GM12878 (cell line): ENCODE measurements at regions of chr1 and their contacts with region 1.

Region 1: DNA sequence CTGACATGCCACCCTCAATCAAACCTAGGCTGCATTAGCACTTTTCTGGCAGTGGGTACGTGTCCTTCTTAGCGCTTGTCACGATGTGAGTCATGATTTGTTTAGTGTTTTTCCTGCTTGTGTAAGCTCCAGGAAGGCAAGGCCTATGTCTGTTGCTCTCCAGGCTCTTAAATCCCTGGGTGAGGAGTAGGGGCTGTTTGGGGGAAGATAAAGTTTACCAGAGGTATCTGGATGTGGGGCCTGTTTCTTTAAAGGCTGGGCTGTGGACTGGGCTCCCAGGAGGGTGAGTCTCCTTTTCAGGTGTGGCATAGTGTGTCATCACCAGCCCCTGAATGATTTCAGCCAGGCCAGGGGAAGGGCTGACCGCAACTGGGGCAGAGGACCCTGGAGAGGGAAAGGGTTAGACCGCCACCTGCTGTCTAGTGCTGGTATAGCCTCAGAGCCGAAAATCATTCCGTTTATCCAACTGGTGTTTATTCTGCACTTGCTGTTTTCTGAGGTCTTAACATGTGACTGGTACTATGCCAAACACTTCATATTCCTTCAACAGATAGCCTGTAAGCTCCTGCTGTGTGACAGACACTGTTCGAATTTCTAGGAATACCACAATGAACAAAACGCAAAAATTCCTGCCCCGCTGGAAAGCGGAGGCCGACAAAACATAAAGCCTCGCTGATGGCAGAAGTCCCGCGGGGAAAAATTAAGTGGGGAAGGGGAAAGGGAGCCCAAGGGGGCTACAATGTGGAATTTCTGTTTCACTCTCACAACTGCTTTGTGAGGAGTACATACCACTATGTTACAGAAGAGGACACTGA is 9.7 kb downstream of the SERINC2 start:
- DNase-seq: peak; percentile 47
- ATAC-seq: peak; percentile 71
- H3K4me3 ChIP-seq: peak overlapping the region; percentile 29; the same call in 1 of the 2 replicates
- H3K27ac ChIP-seq: no peak overlapping the region
- H3K4me1 ChIP-seq: peaks cover 11% of the 10 kb centered on the region
- H3K27me3 ChIP-seq: no peaks in the 10 kb centered on the region
- CTCF ChIP-seq: peak; percentile 94 to 96 (median 95)
- EP300 ChIP-seq: no peak
- POLR2A ChIP-seq: no peak
- RAD21 ChIP-seq: peak; percentile 80

Region 2: DNA sequence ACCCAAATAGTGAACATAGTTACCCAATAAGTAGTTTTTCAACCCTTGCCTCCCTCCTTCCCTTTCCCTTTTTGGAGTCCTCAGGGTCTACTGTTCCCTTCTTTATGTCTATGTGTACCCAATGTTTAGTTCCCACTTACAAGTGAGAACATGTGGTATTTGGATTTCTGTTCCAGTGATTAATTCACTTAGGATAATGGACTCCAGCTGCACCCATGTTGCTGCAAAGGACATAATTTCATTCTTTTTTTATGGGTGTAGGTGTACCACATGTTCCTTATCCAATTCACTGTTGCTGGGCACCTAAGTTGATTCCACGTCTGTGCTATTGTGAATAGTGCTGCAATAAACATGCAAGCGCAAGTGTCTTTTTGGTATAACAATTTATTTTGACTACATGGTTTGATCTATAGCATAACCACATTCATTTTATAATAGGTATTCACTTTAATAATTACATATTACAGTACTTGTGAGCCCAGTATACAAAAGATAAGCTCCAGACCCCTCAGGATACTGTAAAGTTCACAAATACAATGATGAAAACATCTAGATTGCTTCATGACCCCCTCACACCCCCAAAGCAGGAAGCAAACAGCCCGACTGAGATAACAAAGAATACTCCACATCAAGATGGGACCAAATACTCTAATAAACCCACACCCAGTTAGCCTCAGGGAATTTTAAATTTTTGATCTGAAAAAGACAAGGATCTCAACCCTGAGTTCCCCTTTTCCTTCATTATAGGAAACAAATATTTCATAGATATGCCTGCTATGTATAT is 402.5 kb before region 1 on chr1:
- CTCF ChIA-PET with region 1: no interaction called
- POLR2A ChIA-PET with region 1: no interaction called
- RAD21 ChIA-PET with region 1: no interaction called
- SMC1A ChIA-PET with region 1: no interaction called
- in situ Hi-C with region 1: no loop called
- intact Hi-C with region 1: no loop called
- DNase-seq: no peak
- ATAC-seq: no peak
- H3K4me3 ChIP-seq: no peak overlapping the region
- H3K27ac ChIP-seq: no peak overlapping the region
- H3K4me1 ChIP-seq: no peaks in the 10 kb centered on the region
- H3K27me3 ChIP-seq: no peaks in the 10 kb centered on the region
- CTCF ChIP-seq: no peak
- EP300 ChIP-seq: no peak
- POLR2A ChIP-seq: no peak
- RAD21 ChIP-seq: no peak

Region 3: GRCh38 chr1:31182352-31182751 is 240.4 kb before region 1 on chr1:
- CTCF ChIA-PET with region 1: interaction called, 47 read pairs
- POLR2A ChIA-PET with region 1: interaction called, 3 read pairs
- RAD21 ChIA-PET with region 1: interaction called, 20 read pairs
- SMC1A ChIA-PET with region 1: interaction called, 14 read pairs
- in situ Hi-C with region 1: loop called (anchors 10 kb)
- intact Hi-C with region 1: loop called (anchors 2 kb)
- DNase-seq: no peak
- ATAC-seq: peak; percentile 75
- H3K4me3 ChIP-seq: no peak overlapping the region
- H3K27ac ChIP-seq: no peak overlapping the region
- H3K4me1 ChIP-seq: no peaks in the 10 kb centered on the region
- H3K27me3 ChIP-seq: no peaks in the 10 kb centered on the region; a peak in 3 of 4 replicates
- CTCF ChIP-seq: 0 out of 6 replicates have a peak, but pooled peaks of 1 of the 3 experiments have one; percentile 1
- EP300 ChIP-seq: no peak
- POLR2A ChIP-seq: no peak
- RAD21 ChIP-seq: no peak

Region 4: DNA sequence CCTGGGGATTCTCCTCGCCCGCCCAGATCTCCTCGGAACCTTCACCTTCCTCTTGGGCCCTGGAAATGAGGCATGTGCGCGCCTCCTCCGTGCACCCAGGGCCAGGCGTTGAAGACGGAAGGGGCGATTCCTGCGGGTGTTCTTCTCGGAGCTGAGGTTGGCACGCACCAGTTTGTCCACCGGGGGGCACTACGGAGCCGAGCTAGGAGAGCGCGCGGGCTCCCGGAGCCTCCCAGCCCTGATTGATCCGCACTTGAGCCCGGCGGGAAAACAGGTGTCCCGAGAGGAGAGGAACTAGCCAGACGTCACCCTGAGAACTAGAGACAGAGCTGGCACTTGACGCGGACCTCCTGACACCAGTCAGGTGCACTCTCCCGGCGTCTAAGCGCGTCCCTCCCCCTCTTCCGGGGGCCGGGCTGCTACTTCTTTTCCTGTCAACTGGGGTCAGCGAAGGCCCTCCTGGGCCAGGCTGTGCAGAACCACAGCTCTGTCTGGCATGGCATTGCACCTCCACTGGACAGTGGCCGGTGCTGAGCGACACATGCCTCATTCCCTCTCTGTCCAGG is 28.0 kb before region 1 on chr1:
- CTCF ChIA-PET with region 1: interaction called, 204 read pairs
- POLR2A ChIA-PET with region 1: interaction called, 6 read pairs
- RAD21 ChIA-PET with region 1: interaction called, 99 read pairs
- SMC1A ChIA-PET with region 1: interaction called, 132 read pairs
- in situ Hi-C with region 1: no loop called
- intact Hi-C with region 1: loop called (anchors 1 kb)
- DNase-seq: peak; percentile 21
- ATAC-seq: peak; percentile 98
- H3K4me3 ChIP-seq: peak overlapping the region; percentile 50; the same call in 1 of the 2 replicates
- H3K27ac ChIP-seq: no peak overlapping the region
- H3K4me1 ChIP-seq: peaks cover 2% of the 10 kb centered on the region
- H3K27me3 ChIP-seq: no peaks in the 10 kb centered on the region; a peak in 1 of 4 replicates
- CTCF ChIP-seq: peak; percentile 82 to 92 (median 83)
- EP300 ChIP-seq: peak in 1 of 2 experiments; percentile 10; a peak in 1 of 4 replicates
- POLR2A ChIP-seq: no peak
- RAD21 ChIP-seq: peak; percentile 72

Region 5: DNA sequence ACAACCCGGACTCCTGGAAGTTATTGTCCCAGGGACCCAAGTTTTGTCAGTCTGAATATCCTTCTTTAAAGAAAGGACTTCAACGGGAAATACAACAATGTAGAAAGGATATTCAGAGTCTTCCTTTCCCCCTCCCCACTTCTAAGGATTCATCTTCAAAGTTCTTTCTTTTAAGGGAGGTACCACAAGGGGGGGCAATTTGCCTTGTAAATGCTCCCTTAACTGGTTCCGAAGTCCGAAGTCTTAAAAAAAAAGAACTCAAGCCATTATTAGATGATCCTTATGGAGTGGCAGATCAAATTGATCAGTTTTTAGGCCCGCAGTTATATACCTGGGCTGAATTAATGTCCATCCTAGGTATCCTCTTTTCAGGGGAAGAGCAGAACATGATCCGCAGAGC is 37.3 kb after region 1 on chr1:
- CTCF ChIA-PET with region 1: interaction called, 16 read pairs
- POLR2A ChIA-PET with region 1: no interaction called
- RAD21 ChIA-PET with region 1: no interaction called
- SMC1A ChIA-PET with region 1: no interaction called
- in situ Hi-C with region 1: no loop called
- intact Hi-C with region 1: no loop called
- DNase-seq: no peak
- ATAC-seq: no peak
- H3K4me3 ChIP-seq: no peak overlapping the region
- H3K27ac ChIP-seq: no peak overlapping the region
- H3K4me1 ChIP-seq: no peaks in the 10 kb centered on the region
- H3K27me3 ChIP-seq: no peaks in the 10 kb centered on the region
- CTCF ChIP-seq: peak in 1 of 3 experiments; percentile 7; a peak in 1 of 6 replicates
- EP300 ChIP-seq: no peak
- POLR2A ChIP-seq: no peak
- RAD21 ChIP-seq: no peak

Region 6: GRCh38 chr1:31505911-31506497 is 83.3 kb after region 1 on chr1:
- CTCF ChIA-PET with region 1: interaction called, 72 read pairs
- POLR2A ChIA-PET with region 1: interaction called, 16 read pairs
- RAD21 ChIA-PET with region 1: interaction called, 78 read pairs
- SMC1A ChIA-PET with region 1: interaction called, 91 read pairs
- in situ Hi-C with region 1: no loop called
- intact Hi-C with region 1: no loop called
- DNase-seq: peak; percentile 83
- ATAC-seq: peak; percentile 56
- H3K4me3 ChIP-seq: no peak overlapping the region
- H3K27ac ChIP-seq: 0 out of 2 replicates have a peak overlapping the region, but pooled peaks have one; percentile 51
- H3K4me1 ChIP-seq: peaks cover 23% of the 10 kb centered on the region
- H3K27me3 ChIP-seq: no peaks in the 10 kb centered on the region
- CTCF ChIP-seq: no peak
- EP300 ChIP-seq: peak; percentile 79 to 91
- POLR2A ChIP-seq: no peak; the same call in 1 of the 2 replicates
- RAD21 ChIP-seq: no peak

Region 7: GRCh38 chr1:31564134-31564989 is 141.7 kb after region 1 on chr1:
- CTCF ChIA-PET with region 1: interaction called, 22 read pairs
- POLR2A ChIA-PET with region 1: interaction called, 4 read pairs
- RAD21 ChIA-PET with region 1: interaction called, 3 read pairs
- SMC1A ChIA-PET with region 1: interaction called, 4 read pairs
- in situ Hi-C with region 1: no loop called
- intact Hi-C with region 1: no loop called
- DNase-seq: no peak
- ATAC-seq: peak; percentile 91
- H3K4me3 ChIP-seq: no peak overlapping the region
- H3K27ac ChIP-seq: no peak overlapping the region
- H3K4me1 ChIP-seq: no peaks in the 10 kb centered on the region
- H3K27me3 ChIP-seq: no peaks in the 10 kb centered on the region
- CTCF ChIP-seq: peak; percentile 82 to 86 (median 83)
- EP300 ChIP-seq: no peak
- POLR2A ChIP-seq: no peak
- RAD21 ChIP-seq: peak; percentile 95

Region 8: DNA sequence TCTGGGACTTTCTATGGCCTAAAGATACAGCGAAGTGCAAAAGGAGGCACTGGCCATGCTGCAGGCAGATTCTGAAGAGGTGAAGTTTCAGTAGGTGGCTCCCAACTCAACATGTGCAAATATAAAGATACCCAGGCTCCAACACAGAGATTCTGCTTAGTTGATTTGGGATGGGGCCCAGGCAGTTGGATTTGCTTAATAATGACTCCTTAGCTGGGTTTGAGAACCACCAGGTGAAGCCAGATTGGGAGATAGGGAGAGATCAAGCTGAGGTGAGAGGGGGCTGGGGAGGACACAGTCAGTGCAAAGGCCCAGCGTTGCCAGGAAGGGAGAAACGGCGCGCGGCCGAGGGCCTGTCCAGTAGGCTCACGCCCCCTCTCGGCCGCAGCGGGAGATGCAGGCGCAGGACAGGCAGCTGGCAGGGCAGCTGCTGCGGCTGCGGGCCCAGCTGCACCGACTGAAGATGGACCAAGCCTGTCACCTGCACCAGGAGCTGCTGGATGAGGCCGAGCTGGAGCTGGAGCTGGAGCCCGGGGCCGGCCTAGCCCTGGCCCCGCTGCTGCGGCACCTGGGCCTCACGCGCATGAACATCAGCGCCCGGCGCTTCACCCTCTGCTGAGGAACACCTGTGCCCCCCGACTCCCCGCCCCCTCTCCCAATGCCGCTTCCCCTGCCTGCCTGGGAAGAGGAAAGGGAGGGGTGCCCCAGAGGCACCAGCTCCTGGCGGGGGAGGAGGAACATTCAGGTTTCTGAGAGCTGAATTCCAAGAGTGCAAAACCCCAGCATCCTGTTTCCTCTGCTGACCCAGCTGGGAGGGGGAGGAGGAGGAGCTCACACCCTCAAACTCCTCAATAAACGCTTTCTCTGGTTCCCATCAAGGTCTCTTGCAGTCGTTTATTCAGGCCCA is 825.5 kb after region 1 on chr1:
- CTCF ChIA-PET with region 1: no interaction called
- POLR2A ChIA-PET with region 1: interaction called, 11 read pairs
- RAD21 ChIA-PET with region 1: no interaction called
- SMC1A ChIA-PET with region 1: no interaction called
- in situ Hi-C with region 1: no loop called
- intact Hi-C with region 1: no loop called
- DNase-seq: no peak
- ATAC-seq: peak; percentile 69
- H3K4me3 ChIP-seq: peak overlapping the region; percentile 10; the same call in 1 of the 2 replicates
- H3K27ac ChIP-seq: peak overlapping the region; percentile 89
- H3K4me1 ChIP-seq: peaks cover 52% of the 10 kb centered on the region
- H3K27me3 ChIP-seq: no peaks in the 10 kb centered on the region
- CTCF ChIP-seq: peak; percentile 89 to 99 (median 96)
- EP300 ChIP-seq: no peak
- POLR2A ChIP-seq: peak; percentile 31; the same call in 1 of the 2 replicates
- RAD21 ChIP-seq: peak; percentile 64